SK-N-SH (cell line): ENCODE measurements at regions of chr15 and their contacts with region 1.

Region 1: GRCh38 chr15:62254137-62254934 is 89.3 kb upstream of the C2CD4B start:
- DNase-seq: peak; percentile 76
- H3K4me3 ChIP-seq: no peak overlapping the region; a peak in 1 of 4 replicates
- H3K27ac ChIP-seq: no peak overlapping the region
- H3K4me1 ChIP-seq: no peaks in the 10 kb centered on the region
- H3K27me3 ChIP-seq: no peaks in the 10 kb centered on the region; the same call in 1 of the 2 replicates
- CTCF ChIP-seq: peak; percentile 66
- EP300 ChIP-seq: no peak
- RAD21 ChIP-seq: peak; percentile 82

Region 2: DNA sequence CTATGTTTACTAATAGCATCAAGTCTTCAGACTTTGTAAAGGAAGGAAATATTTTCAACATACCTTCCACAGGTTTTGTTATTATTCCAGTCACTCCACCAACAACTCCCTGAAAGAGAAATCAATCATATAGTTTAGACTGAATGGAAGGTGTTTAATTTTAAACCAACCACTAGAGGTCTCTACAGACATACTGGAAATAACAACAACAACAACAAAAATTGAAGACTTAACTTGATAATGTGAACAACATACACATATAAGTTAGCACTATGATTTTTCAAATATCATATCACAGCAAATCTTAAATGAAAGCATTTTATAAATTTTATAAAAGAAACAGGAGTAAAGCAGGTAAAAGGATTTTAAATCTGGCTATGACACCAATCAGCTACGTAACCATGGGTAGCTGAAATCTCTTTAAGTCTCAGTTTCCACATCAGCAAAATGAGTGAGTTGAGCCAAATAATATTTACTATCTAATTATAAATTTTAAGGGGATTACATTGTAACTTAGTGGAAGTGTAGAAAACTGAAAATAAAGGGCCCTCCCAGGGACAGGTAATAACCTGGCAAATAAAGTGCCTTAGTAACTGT is 382.3 kb before region 1 on chr15:
- CTCF ChIA-PET with region 1: interaction called, 14 read pairs
- POLR2A ChIA-PET with region 1: no interaction called
- DNase-seq: peak; percentile 11
- H3K4me3 ChIP-seq: no peak overlapping the region
- H3K27ac ChIP-seq: no peak overlapping the region
- H3K4me1 ChIP-seq: no peaks in the 10 kb centered on the region
- H3K27me3 ChIP-seq: no peaks in the 10 kb centered on the region
- CTCF ChIP-seq: peak; percentile 80
- EP300 ChIP-seq: no peak
- RAD21 ChIP-seq: peak; percentile 79

Region 3: DNA sequence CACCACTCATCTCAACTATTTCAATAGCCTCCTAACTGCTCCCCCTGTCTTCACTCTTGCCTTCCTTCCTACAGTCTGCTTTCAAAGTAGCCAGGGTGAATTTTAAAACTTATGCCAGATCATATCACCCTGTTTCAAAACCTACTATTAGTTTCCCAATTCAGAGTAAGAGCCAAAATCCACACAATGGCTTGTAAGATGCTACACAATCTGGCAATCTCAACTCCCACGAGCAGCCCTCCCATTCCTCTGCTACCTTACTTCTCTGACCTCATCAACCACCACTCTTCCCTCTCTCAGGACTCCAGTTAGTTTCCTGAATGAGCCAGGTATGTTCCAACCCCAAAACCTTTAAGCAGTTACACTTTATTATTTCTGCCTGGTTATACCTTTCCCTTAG is 256.6 kb before region 1 on chr15:
- CTCF ChIA-PET with region 1: no interaction called
- POLR2A ChIA-PET with region 1: no interaction called
- DNase-seq: no peak
- H3K4me3 ChIP-seq: no peak overlapping the region
- H3K27ac ChIP-seq: no peak overlapping the region
- H3K4me1 ChIP-seq: no peaks in the 10 kb centered on the region
- H3K27me3 ChIP-seq: no peaks in the 10 kb centered on the region
- CTCF ChIP-seq: no peak
- EP300 ChIP-seq: no peak
- RAD21 ChIP-seq: no peak

Region 4: DNA sequence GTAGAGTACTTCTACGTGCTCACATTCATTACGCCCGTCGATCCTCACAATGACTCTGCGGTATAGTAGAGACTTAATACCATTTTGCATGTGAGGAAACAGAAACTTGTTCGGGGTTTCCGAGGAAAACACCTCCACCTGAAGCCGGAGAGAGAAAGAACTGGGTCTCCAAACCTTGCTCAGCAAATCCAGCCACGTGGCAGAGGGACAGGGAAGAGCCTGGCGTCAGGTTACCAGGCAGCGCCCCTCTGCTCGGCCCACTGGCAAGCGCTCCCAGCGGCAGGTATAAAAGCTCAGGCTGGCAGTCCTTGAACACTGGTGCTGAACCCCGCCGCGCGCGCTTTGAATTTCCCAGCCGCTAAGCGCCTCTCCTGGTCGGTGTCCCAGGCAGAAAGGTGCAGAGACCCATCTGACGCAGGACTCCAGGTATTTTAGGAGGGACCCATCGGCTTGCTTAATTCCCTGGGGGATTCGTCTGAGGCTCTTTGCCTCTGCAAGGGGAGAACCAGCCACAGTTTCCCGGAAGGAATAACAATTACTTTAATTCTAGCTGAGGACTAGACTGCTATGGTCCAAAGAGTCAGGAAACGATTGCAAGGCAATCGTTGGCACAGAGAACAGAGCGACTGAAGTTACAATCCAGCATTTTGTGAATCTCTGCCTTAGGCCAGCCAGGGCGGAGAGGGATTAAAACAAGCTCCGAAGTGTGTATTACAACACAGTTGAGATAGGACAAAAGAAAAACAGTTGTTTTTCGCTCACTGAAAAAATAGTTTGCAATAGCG is 187.5 kb before region 1 on chr15 and contains the start of gene C2CD4A:
- CTCF ChIA-PET with region 1: interaction called, 10 read pairs
- POLR2A ChIA-PET with region 1: no interaction called
- DNase-seq: no peak
- H3K4me3 ChIP-seq: peak within 1 kb of the TSS in 1 of 2 experiments; percentile 56; a peak in 2 of 4 replicates
- H3K27ac ChIP-seq: no peak within 1 kb of the TSS
- H3K4me1 ChIP-seq: no peaks in the 10 kb centered on the region; a peak in 1 of 4 replicates
- H3K27me3 ChIP-seq: no peaks in the 10 kb centered on the region
- CTCF ChIP-seq: no peak
- EP300 ChIP-seq: no peak
- RAD21 ChIP-seq: no peak
- polyA plus RNA-seq, gene C2CD4A: not detected in 2 replicates

Region 5: DNA sequence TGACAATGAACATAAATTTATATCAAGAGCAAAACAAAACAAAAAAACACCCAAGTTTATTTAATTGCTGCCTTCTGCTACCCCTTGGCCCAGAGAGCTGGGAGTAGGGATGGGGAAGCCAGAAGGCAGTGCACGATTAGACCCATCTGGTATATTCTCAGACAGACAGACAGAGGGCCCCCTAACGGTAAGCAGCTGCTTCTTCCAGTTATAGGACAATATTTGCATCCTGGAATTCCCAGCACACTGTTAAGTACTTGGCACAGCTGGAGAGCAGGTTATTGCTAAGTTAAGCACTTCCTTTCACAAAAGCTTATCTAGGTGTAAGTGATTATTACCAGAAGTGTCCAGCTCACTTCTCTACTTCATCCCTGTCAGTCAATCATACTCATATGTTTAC is 128.6 kb before region 1 on chr15:
- CTCF ChIA-PET with region 1: interaction called, 13 read pairs
- POLR2A ChIA-PET with region 1: no interaction called
- DNase-seq: peak; percentile 36
- H3K4me3 ChIP-seq: no peak overlapping the region
- H3K27ac ChIP-seq: no peak overlapping the region; a peak in 1 of 4 replicates
- H3K4me1 ChIP-seq: peaks cover 0 to 5% of the 10 kb centered on the region in 2 experiments; a peak in 2 of 4 replicates
- H3K27me3 ChIP-seq: no peaks in the 10 kb centered on the region
- CTCF ChIP-seq: peak; percentile 53
- EP300 ChIP-seq: no peak
- RAD21 ChIP-seq: peak; percentile 59

Region 6: GRCh38 chr15:62241135-62241770 is 13.1 kb before region 1 on chr15:
- CTCF ChIA-PET with region 1: interaction called, 36 read pairs
- POLR2A ChIA-PET with region 1: no interaction called
- DNase-seq: no peak
- H3K4me3 ChIP-seq: no peak overlapping the region
- H3K27ac ChIP-seq: no peak overlapping the region
- H3K4me1 ChIP-seq: no peaks in the 10 kb centered on the region; a peak in 1 of 4 replicates
- H3K27me3 ChIP-seq: no peaks in the 10 kb centered on the region
- CTCF ChIP-seq: peak; percentile 34
- EP300 ChIP-seq: no peak
- RAD21 ChIP-seq: no peak

Region 7: DNA sequence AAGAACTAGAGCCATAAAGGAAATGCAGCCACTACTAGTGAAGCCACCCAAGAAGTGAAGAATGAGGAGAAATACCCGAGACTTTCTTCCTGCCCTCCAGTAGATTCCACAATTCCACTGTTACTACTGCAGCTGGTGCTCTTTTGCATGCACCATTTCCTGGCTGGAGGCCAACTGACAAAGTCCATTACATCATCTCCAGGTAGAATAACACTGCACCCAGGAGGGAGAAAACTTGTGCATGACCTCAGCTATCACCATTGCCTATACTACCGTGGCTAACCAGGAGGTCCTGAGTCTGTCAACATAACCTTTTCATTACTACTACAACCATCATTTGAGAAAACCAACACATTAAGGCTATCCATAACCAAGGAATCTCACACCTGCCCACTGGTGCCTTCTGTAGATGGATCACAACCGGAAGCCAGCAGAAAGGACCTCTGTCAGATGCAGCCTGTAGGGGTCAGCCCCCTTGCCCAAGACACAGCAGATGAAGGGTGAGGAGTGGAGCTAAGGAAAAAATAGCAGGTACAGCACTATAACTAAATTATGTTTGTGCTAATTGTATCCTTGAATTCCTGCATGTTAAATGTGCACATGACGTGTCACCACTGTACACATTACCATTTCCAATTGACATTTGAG is 111.6 kb after region 1 on chr15:
- CTCF ChIA-PET with region 1: no interaction called
- POLR2A ChIA-PET with region 1: no interaction called
- DNase-seq: no peak
- H3K4me3 ChIP-seq: no peak overlapping the region
- H3K27ac ChIP-seq: no peak overlapping the region
- H3K4me1 ChIP-seq: no peaks in the 10 kb centered on the region; a peak in 1 of 4 replicates
- H3K27me3 ChIP-seq: no peaks in the 10 kb centered on the region
- CTCF ChIP-seq: no peak
- EP300 ChIP-seq: no peak
- RAD21 ChIP-seq: no peak

Region 8: DNA sequence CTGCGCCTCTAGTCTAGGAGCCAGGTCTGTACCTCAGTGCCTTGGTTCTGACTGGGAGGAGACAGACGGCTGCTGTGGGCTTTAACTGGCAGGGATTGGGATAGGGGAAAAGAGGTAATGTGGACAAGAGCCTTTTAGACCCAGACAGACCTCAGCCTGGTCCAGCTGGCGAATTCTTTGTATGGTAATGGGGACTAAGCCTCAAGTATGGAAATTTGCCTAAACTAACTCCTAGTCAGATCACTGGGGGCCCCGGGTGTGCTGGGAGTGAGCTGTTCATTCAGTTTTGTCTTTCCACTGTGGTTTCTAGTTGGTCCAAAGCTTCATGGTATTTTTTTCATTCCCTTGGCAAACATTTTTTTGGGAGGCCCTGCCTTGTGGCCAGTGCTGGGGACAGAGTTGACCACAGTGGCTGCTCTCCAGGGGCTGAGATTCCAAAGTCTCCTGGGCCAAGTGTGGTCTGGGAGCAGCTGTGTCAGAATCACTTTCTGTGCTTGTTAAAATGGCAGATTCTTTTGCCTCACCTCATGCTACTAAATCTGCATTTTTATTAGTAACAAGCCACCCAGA is 172.1 kb after region 1 on chr15:
- CTCF ChIA-PET with region 1: no interaction called
- POLR2A ChIA-PET with region 1: no interaction called
- DNase-seq: no peak
- H3K4me3 ChIP-seq: no peak overlapping the region
- H3K27ac ChIP-seq: no peak overlapping the region
- H3K4me1 ChIP-seq: peaks cover 0 to 27% of the 10 kb centered on the region in 2 experiments; a peak in 2 of 4 replicates
- H3K27me3 ChIP-seq: no peaks in the 10 kb centered on the region
- CTCF ChIP-seq: no peak
- EP300 ChIP-seq: no peak
- RAD21 ChIP-seq: no peak